Motor neuron (in vitro differentiated cells): ENCODE measurements at regions of chr3 and their contacts with region 1.

Region 1: GRCh38 chr3:152183473-152183872 is 85.3 kb upstream of the MBNL1 start:
- ATAC-seq: peak in 2 of 8 experiments; percentile 58 to 63
- H3K4me3 ChIP-seq: no peak overlapping the region
- H3K27ac ChIP-seq: no peak overlapping the region
- H3K4me1 ChIP-seq: no peaks in the 10 kb centered on the region

Region 2: DNA sequence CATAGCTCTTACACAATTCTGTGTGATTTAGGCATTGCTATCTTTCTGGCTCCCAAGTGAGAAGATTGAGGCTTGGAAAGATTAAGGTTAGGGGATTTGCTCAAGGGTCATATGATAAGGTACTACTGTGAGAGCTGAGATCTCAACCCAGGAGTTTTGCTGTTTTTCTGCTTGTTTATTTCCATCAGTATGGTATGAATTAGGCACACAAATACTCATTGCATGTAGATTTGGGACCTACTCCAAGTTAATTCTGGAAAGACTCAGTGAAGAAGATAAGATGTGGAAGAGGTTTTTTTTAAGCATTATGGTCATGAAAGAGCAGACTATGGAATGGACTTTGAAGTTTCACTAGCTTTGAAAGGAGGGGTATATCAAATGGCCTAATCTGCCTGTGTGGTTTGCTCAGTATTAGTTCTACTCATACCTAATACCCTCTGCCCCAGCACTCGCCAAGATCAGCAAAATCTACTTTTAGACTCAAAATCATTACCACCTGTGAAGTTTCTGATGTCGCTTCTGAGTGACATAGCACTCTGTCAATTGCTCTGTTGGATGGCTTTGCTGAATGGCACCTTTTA is 97.8 kb after region 1 on chr3:
- in situ Hi-C with region 1: no loop called
- ATAC-seq: no peak
- H3K4me3 ChIP-seq: no peak overlapping the region
- H3K27ac ChIP-seq: no peak overlapping the region
- H3K4me1 ChIP-seq: peaks cover 0 to 7% of the 10 kb centered on the region in 2 donors

Region 3: GRCh38 chr3:152471814-152472671 is 288.6 kb after region 1 on chr3:
- in situ Hi-C with region 1: loop called in 1 of 9 experiments (anchors 25 kb)
- ATAC-seq: peak in 4 of 8 experiments; percentile 40 to 85 (median 74)
- H3K4me3 ChIP-seq: no peak overlapping the region
- H3K27ac ChIP-seq: no peak overlapping the region
- H3K4me1 ChIP-seq: no peaks in the 10 kb centered on the region